ENCODE measurements at regions of chr2 and their contacts with region 1.

Region 1: DNA sequence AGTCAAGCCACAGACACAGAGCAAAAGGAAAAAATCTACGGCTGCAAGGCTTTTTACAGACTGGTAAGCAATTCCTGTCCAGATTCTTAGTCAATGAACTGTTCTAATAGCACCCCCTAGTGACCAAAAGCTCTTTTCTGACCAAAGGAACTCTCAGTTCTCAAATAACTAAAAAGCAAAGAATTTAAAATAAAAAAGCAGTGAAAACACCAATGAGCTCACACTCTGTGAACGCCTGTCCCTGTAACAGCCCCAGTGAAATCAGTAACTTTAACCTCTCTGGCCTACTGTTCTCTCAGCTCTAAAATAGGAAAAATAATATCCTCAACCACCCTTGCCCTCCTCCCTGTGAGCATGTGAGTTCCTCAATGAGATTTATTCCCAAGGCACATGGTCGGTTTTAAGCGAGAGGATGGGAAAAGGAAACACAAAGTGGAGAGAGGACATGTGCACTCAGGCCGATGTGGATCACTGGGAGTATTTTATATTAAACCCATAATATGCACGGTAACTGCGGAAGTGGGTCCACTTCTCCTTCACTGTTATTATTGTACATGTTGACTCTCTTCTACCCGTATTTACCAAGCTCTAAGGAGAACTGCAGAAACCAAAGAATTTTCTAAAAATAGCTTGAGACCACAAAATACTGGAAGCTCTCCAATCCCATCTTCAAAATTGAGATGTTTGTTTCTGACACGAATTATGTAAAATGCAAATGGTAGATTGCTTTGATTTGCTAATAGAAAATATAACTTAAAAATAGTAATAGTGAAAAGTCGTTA is 128.5 kb downstream of the STK39 start:
- DNase-seq: no peak
- ATAC-seq: peak; percentile 71
- H3K4me3 Mint-ChIP-seq: no peak overlapping the region
- H3K27ac Mint-ChIP-seq: no peak overlapping the region
- H3K4me1 Mint-ChIP-seq: no peaks in the 10 kb centered on the region
- H3K27me3 Mint-ChIP-seq: no peaks in the 10 kb centered on the region
- CTCF ChIP-seq: peak; percentile 52

Region 2: GRCh38 chr2:166539340-166540162 is 1579.4 kb before region 1 on chr2:
- CTCF ChIA-PET with region 1: interaction called, 61 read pairs
- POLR2A ChIA-PET with region 1: no interaction called
- intact Hi-C with region 1: loop called (anchors 1 kb)
- DNase-seq: no peak
- ATAC-seq: peak; percentile 68
- H3K4me3 Mint-ChIP-seq: no peak overlapping the region
- H3K27ac Mint-ChIP-seq: no peak overlapping the region
- H3K4me1 Mint-ChIP-seq: peaks cover 2% of the 10 kb centered on the region
- H3K27me3 Mint-ChIP-seq: peaks cover 5% of the 10 kb centered on the region
- CTCF ChIP-seq: peak; percentile 47

Region 3: GRCh38 chr2:167264380-167264779 is 854.5 kb before region 1 on chr2:
- CTCF ChIA-PET with region 1: interaction called, 11 read pairs
- POLR2A ChIA-PET with region 1: no interaction called
- intact Hi-C with region 1: no loop called
- DNase-seq: no peak
- ATAC-seq: no peak
- H3K4me3 Mint-ChIP-seq: no peak overlapping the region
- H3K27ac Mint-ChIP-seq: no peak overlapping the region
- H3K4me1 Mint-ChIP-seq: no peaks in the 10 kb centered on the region
- H3K27me3 Mint-ChIP-seq: no peaks in the 10 kb centered on the region
- CTCF ChIP-seq: no peak

Region 4: DNA sequence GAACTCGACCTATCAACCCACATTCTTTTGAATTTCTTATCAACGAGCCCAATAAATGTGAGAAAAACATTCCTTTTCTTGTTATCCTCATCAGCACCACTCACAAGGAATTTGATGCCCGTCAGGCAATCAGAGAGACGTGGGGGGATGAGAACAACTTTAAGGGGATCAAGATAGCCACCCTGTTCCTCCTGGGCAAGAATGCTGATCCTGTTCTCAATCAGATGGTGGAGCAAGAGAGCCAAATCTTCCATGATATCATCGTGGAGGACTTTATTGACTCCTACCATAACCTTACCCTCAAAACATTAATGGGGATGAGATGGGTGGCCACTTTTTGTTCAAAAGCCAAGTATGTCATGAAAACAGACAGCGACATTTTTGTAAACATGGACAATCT is 249.7 kb before region 1 on chr2:
- CTCF ChIA-PET with region 1: interaction called, 3 read pairs
- POLR2A ChIA-PET with region 1: no interaction called
- intact Hi-C with region 1: loop called (anchors 5 kb)
- DNase-seq: no peak
- ATAC-seq: no peak
- H3K4me3 Mint-ChIP-seq: no peak overlapping the region
- H3K27ac Mint-ChIP-seq: no peak overlapping the region
- H3K4me1 Mint-ChIP-seq: no peaks in the 10 kb centered on the region
- H3K27me3 Mint-ChIP-seq: peaks cover 2% of the 10 kb centered on the region
- CTCF ChIP-seq: no peak

Region 5: GRCh38 chr2:168107322-168107721 is 11.6 kb before region 1 on chr2:
- CTCF ChIA-PET with region 1: interaction called, 37 read pairs
- POLR2A ChIA-PET with region 1: interaction called, 12 read pairs
- intact Hi-C with region 1: no loop called
- DNase-seq: no peak
- ATAC-seq: no peak
- H3K4me3 Mint-ChIP-seq: no peak overlapping the region
- H3K27ac Mint-ChIP-seq: no peak overlapping the region
- H3K4me1 Mint-ChIP-seq: no peaks in the 10 kb centered on the region
- H3K27me3 Mint-ChIP-seq: no peaks in the 10 kb centered on the region
- CTCF ChIP-seq: no peak

Region 6: DNA sequence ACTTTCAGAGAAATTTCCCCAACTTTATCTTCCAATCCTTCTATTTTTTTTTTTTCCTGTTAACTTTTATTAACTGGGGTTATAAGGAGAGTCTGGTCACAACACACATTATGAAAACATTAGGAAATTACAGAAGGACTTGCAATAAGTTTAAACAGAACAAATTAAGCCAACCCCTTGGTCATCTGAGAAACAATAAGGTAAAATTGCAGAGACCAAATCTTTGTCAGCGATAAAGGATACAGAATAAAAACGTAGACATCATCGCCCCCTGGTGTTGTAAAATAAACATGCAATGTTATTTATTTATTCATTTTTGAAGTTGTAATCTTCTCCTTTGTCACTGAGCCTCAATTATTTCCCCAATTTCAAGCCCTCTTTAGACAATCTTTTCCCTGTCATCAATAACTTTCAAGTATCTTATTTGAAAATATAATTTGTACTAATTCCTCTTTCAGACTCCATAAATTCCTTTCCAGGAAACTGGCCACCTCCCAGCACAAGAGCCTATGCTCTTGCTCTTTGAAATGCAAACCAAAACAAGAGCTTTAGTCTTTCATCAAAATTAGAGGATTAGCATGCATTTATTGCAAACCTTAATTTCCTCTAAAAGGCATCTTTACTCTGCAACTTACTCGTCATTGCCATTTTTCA is 801.7 kb after region 1 on chr2:
- CTCF ChIA-PET with region 1: interaction called, 6 read pairs
- POLR2A ChIA-PET with region 1: no interaction called
- intact Hi-C with region 1: loop called (anchors 5 kb)
- DNase-seq: no peak
- ATAC-seq: no peak
- H3K4me3 Mint-ChIP-seq: no peak overlapping the region
- H3K27ac Mint-ChIP-seq: no peak overlapping the region
- H3K4me1 Mint-ChIP-seq: no peaks in the 10 kb centered on the region
- H3K27me3 Mint-ChIP-seq: peaks cover 10% of the 10 kb centered on the region
- CTCF ChIP-seq: peak; percentile 50